ENCODE measurements at regions of chr3 and their contacts with region 1.

Region 1: GRCh38 chr3:14947886-14948555 is 638 bp downstream of the NR2C2 start:
- DNase-seq: peak; percentile 93 to 98 (median 96)
- ATAC-seq: peak; percentile 94
- H3K4me3 ChIP-seq: peak overlapping the region; percentile 93
- H3K4me3 Mint-ChIP-seq: peak overlapping the region; percentile 97 to 100 (median 98)
- H3K27ac ChIP-seq: peak overlapping the region; percentile 99
- H3K27ac Mint-ChIP-seq: peak overlapping the region; percentile 98 to 100 (median 100)
- H3K4me1 ChIP-seq: peaks cover 19 to 22% of the 10 kb centered on the region in 2 donors
- H3K4me1 Mint-ChIP-seq: peaks cover 31 to 74% (median 60%) of the 10 kb centered on the region in 7 donors
- H3K27me3 ChIP-seq: no peaks in the 10 kb centered on the region
- H3K27me3 Mint-ChIP-seq: peaks cover 0 to 2% (median 0%) of the 10 kb centered on the region in 5 donors

Region 2: DNA sequence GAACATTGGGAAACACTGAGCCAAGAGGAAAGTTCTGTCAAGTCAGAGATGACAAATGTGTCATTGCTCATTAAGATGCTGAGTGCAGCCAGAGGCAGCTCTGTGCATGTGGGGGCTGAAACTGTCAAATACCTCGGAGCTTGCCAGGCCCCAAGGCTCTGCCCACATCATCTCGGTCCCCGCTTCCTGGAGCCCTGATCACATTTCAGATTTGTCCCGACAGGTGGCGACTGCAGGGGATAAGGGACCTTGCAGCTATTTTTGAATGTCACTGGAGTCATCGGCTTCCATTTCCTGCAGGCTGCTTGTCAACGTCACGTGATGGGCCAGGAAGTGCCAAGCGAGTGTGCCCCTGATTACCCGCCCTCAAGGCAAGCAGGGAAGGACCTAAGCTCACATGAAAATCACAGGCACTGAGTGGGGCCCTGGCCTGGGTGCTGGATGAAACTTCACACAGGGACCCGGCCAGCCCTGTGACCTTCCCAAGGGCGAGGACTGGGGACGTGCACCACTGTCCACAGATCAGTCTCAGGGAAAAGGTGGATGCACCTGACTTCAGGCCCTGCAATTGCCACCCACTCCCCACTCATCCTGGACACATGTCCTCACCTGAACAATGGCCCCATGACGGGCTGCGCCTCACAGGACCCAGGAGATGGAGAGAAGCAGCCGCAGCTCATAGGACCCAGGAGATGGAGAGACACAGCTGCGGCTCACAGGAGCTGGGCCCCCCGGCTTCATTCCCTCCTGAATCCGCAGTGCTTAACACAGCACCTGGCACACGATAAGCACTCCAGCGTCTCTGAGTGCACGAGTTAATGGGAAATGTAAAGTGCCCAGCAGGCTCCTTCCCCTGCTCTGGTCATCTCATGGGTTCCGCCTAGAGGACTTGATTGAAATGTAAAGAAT is 1601.3 kb before region 1 on chr3:
- CTCF ChIA-PET with region 1: no interaction called
- POLR2A ChIA-PET with region 1: no interaction called
- intact Hi-C with region 1: loop called in 1 of 2 experiments (anchors 5 kb)
- DNase-seq: peak; percentile 29 to 89 (median 86)
- ATAC-seq: peak; percentile 87
- H3K4me3 ChIP-seq: peak overlapping the region; percentile 33
- H3K4me3 Mint-ChIP-seq: peak overlapping the region; percentile 37 to 84 (median 71)
- H3K27ac ChIP-seq: peak overlapping the region; percentile 68
- H3K27ac Mint-ChIP-seq: peak overlapping the region; percentile 76 to 96 (median 91)
- H3K4me1 ChIP-seq: peaks cover 19 to 44% of the 10 kb centered on the region in 2 donors
- H3K4me1 Mint-ChIP-seq: peaks cover 42 to 64% (median 57%) of the 10 kb centered on the region in 7 donors
- H3K27me3 ChIP-seq: no peaks in the 10 kb centered on the region
- H3K27me3 Mint-ChIP-seq: no peaks in the 10 kb centered on the region

Region 3: DNA sequence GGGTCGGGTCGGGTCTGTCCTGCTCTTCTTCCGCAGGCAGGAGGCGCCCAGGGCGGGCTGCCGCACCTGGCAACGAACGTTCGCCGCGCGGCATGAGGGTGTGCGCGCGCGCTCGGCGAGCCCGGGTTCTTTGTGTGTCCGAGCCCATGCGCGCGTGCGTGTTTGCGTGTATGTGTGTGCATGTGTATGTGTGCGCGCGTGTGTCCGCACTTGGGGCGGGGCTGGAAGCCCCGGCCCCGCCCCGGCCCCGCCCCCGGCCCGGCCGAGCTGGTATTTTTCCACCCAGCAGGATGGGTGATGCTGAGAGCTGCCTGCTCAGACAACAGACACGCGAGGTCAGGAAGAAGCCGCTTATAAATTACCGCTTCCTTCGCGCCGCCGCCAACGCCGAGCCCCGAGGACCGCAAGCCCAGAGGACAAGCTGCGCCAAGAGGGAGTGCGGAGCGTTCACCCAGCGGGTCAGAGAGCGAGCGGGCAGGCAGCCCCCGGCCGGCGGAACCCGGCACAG is 545.7 kb before region 1 on chr3 and contains the start of gene SLC6A6:
- CTCF ChIA-PET with region 1: no interaction called
- POLR2A ChIA-PET with region 1: no interaction called
- intact Hi-C with region 1: loop called (anchors 1 kb)
- DNase-seq: peak; percentile 86 to 95 (median 92)
- ATAC-seq: peak; percentile 89
- H3K4me3 ChIP-seq: peak within 1 kb of the TSS; percentile 100
- H3K4me3 Mint-ChIP-seq: peak within 1 kb of the TSS; percentile 91 to 100 (median 98)
- H3K27ac ChIP-seq: peak within 1 kb of the TSS; percentile 83
- H3K27ac Mint-ChIP-seq: peak within 1 kb of the TSS; percentile 89 to 98 (median 96)
- H3K4me1 ChIP-seq: peaks cover 20 to 27% of the 10 kb centered on the region in 2 donors
- H3K4me1 Mint-ChIP-seq: peaks cover 33 to 50% (median 44%) of the 10 kb centered on the region in 7 donors
- H3K27me3 ChIP-seq: no peaks in the 10 kb centered on the region
- H3K27me3 Mint-ChIP-seq: peaks cover 0 to 1% (median 0%) of the 10 kb centered on the region in 5 donors
- total RNA-seq, gene SLC6A6: 34.5 to 87.5 (median 35.6) TPM

Region 4: GRCh38 chr3:14959359-14959943 is 11.4 kb after region 1 on chr3:
- CTCF ChIA-PET with region 1: interaction called, 3 read pairs
- POLR2A ChIA-PET with region 1: interaction called, 3 read pairs
- intact Hi-C with region 1: loop called (anchors 1 kb)
- DNase-seq: peak in 1 of 9 donors; percentile 5
- ATAC-seq: peak; percentile 36
- H3K4me3 ChIP-seq: peak overlapping the region; percentile 30
- H3K4me3 Mint-ChIP-seq: peak overlapping the region; percentile 12 to 92 (median 78)
- H3K27ac ChIP-seq: peak overlapping the region; percentile 51
- H3K27ac Mint-ChIP-seq: peak overlapping the region; percentile 49 to 93 (median 79)
- H3K4me1 ChIP-seq: peaks cover 11 to 17% of the 10 kb centered on the region in 2 donors
- H3K4me1 Mint-ChIP-seq: peaks cover 28 to 62% (median 57%) of the 10 kb centered on the region in 7 donors
- H3K27me3 ChIP-seq: no peaks in the 10 kb centered on the region
- H3K27me3 Mint-ChIP-seq: no peaks in the 10 kb centered on the region

Region 5: GRCh38 chr3:15377961-15378791 is 430.2 kb after region 1 on chr3:
- CTCF ChIA-PET with region 1: no interaction called
- POLR2A ChIA-PET with region 1: no interaction called
- intact Hi-C with region 1: loop called (anchors 1 to 5 kb)
- DNase-seq: peak; percentile 80 to 96 (median 93)
- ATAC-seq: peak; percentile 99
- H3K4me3 ChIP-seq: no peak overlapping the region
- H3K4me3 Mint-ChIP-seq: peak overlapping the region in 5 of 10 donors; percentile 9 to 54 (median 17)
- H3K27ac ChIP-seq: peak overlapping the region; percentile 76
- H3K27ac Mint-ChIP-seq: peak overlapping the region; percentile 78 to 97 (median 93)
- H3K4me1 ChIP-seq: peaks cover 4 to 5% of the 10 kb centered on the region in 2 donors
- H3K4me1 Mint-ChIP-seq: peaks cover 8 to 14% (median 13%) of the 10 kb centered on the region in 7 donors
- H3K27me3 ChIP-seq: no peaks in the 10 kb centered on the region
- H3K27me3 Mint-ChIP-seq: no peaks in the 10 kb centered on the region

Measured in naive thymus-derived CD4-positive, alpha-beta T cell (primary cell).